Endothelial cell of umbilical vein (primary cell): ENCODE measurements at regions of chr5 and their contacts with region 1.

Region 1: GRCh38 chr5:15914638-15915037 is 265.0 kb downstream of the MARCHF11 start:
- DNase-seq: no peak
- H3K4me3 ChIP-seq: no peak overlapping the region
- H3K27ac ChIP-seq: no peak overlapping the region
- H3K4me1 ChIP-seq: no peaks in the 10 kb centered on the region
- H3K27me3 ChIP-seq: no peaks in the 10 kb centered on the region
- CTCF ChIP-seq: no peak
- POLR2A ChIP-seq: no peak

Region 2: DNA sequence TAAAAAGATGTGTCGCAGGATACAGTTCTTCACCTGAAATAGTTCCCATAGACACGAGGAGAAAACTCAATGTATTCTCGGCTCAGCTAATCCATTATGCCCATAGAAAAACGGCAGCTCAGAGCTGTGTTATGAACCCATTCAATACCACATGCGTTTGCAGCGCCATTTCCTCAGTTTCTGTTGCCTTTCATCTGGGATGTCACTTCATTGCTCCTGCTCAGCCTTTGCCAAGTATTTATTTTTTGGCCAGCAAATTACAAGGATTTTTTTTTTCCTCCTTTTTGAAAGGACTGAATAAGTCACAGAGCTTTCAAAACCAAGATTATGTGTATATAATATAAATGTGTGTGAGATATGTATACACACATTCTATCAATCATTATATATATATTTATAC is 16.0 kb before region 1 on chr5:
- CTCF ChIA-PET with region 1: no interaction called
- POLR2A ChIA-PET with region 1: no interaction called
- dilution Hi-C with region 1: no loop called
- intact Hi-C with region 1: loop called (anchors 1 kb)
- DNase-seq: no peak
- H3K4me3 ChIP-seq: no peak overlapping the region
- H3K27ac ChIP-seq: no peak overlapping the region
- H3K4me1 ChIP-seq: peaks cover 2% of the 10 kb centered on the region
- H3K27me3 ChIP-seq: no peaks in the 10 kb centered on the region
- CTCF ChIP-seq: no peak
- POLR2A ChIP-seq: no peak

Region 3: GRCh38 chr5:15983392-15983791 is 68.8 kb after region 1 on chr5:
- CTCF ChIA-PET with region 1: no interaction called
- POLR2A ChIA-PET with region 1: no interaction called
- dilution Hi-C with region 1: no loop called
- intact Hi-C with region 1: no loop called
- DNase-seq: no peak
- H3K4me3 ChIP-seq: no peak overlapping the region
- H3K27ac ChIP-seq: no peak overlapping the region
- H3K4me1 ChIP-seq: no peaks in the 10 kb centered on the region
- H3K27me3 ChIP-seq: no peaks in the 10 kb centered on the region
- CTCF ChIP-seq: no peak
- POLR2A ChIP-seq: no peak